PC-3 (cell line): ENCODE measurements at regions of chr3 and their contacts with region 1.

Region 1: GRCh38 chr3:153161138-153161713 is 800 bp upstream of the RAP2B start:
- DNase-seq: peak; percentile 99
- ATAC-seq: peak; percentile 69
- H3K4me3 ChIP-seq: peak overlapping the region; percentile 95
- H3K27ac ChIP-seq: peak overlapping the region; percentile 94
- H3K4me1 ChIP-seq: peaks cover 31% of the 10 kb centered on the region
- H3K27me3 ChIP-seq: no peaks in the 10 kb centered on the region
- CTCF ChIP-seq: no peak

Region 2: DNA sequence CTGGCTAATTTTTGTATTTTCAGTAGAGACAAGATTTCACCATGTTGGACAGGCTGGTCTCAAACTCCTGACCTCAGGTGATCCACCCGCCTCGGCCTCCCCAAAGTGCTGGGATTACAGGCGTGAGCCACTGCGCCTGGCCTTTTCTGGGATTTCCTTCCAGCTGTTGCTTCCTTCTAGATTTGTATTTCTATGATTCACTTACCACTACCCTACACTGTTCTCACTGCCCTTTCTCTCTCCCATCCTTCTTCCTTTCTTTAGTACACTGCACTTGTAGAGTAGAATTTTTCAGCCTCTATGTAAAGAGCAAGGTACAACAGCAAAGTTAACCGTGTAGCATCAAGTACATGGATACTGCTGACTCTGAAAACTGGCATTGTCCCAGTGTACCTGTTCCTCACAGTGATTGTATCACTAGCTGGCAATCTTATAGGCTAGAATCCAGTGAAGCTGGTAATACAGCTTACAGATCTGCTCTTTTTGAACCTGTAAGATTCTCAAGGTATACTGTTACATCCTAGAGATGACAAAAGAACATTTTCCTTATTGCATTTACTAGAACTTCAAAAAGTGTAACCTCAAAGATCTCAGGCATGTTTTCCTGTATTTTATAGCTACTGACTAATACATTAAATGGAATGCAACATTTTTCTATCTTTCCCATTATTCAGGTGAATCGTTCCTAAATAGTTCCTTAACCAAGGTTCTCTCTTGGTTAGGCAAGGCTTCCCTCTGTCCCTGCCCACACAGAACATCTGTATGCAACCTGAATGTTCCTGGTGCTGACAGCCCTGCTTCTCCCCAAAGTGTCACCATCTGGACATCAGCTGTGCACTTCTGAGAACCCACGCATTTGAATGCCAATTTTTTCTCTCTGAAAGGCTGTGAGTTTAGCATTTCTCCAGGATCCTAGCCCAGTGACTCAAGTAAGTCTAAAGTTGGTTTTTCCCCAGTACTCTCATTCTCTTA is 73.3 kb before region 1 on chr3:
- CTCF ChIA-PET with region 1: no interaction called
- POLR2A ChIA-PET with region 1: no interaction called
- intact Hi-C with region 1: loop called (anchors 2 kb)
- DNase-seq: peak; percentile 75
- ATAC-seq: peak; percentile 83
- H3K4me3 ChIP-seq: no peak overlapping the region
- H3K27ac ChIP-seq: peak overlapping the region; percentile 45
- H3K4me1 ChIP-seq: peaks cover 25% of the 10 kb centered on the region
- H3K27me3 ChIP-seq: no peaks in the 10 kb centered on the region
- CTCF ChIP-seq: no peak

Region 3: GRCh38 chr3:153144779-153145178 is 16.4 kb before region 1 on chr3:
- CTCF ChIA-PET with region 1: no interaction called
- POLR2A ChIA-PET with region 1: interaction called, 20 read pairs
- intact Hi-C with region 1: loop called (anchors 1 kb)
- DNase-seq: peak; percentile 79
- ATAC-seq: peak; percentile 21
- H3K4me3 ChIP-seq: peak overlapping the region; percentile 28; the same call in 1 of the 2 replicates
- H3K27ac ChIP-seq: peak overlapping the region; percentile 80
- H3K4me1 ChIP-seq: peaks cover 56% of the 10 kb centered on the region
- H3K27me3 ChIP-seq: no peaks in the 10 kb centered on the region
- CTCF ChIP-seq: no peak

Region 4: GRCh38 chr3:153284282-153284938 is 123.2 kb after region 1 on chr3:
- CTCF ChIA-PET with region 1: interaction called, 3 read pairs
- POLR2A ChIA-PET with region 1: interaction called, 9 read pairs
- intact Hi-C with region 1: loop called (anchors 1 kb)
- DNase-seq: peak; percentile 78
- ATAC-seq: peak; percentile 87
- H3K4me3 ChIP-seq: no peak overlapping the region
- H3K27ac ChIP-seq: peak overlapping the region; percentile 46
- H3K4me1 ChIP-seq: peaks cover 42% of the 10 kb centered on the region
- H3K27me3 ChIP-seq: no peaks in the 10 kb centered on the region
- CTCF ChIP-seq: no peak

Region 5: DNA sequence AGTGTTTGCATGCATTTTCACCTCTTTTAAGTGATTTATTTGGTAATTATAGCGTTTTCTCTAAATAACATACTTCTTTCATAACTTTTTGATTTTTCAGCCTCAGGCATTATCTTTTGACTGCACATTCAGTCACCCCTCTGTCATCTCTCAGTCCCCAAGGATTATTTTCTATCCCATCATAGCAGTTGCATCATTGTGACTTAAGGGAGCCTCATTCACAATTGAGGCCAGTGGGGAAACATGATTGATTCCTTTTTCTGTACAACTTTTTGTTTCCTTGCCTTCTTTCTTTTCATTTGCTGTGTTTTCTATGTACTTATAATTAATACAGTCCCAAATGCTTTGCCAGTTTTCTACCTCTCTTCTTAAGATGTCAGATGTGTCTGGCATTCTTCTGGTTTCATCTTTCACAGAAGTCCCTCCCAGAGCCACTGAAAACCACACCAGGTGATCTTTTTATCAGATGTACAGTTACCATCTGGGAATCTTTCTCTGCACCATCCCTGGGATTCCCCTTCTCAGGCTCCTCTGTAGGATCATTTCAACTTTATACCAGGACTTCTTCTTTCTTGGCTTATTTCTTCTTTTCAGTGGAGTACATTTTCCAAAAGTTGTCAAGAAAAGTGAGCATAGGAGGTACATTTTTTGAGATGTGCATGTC is 152.2 kb after region 1 on chr3:
- CTCF ChIA-PET with region 1: no interaction called
- POLR2A ChIA-PET with region 1: no interaction called
- intact Hi-C with region 1: no loop called
- DNase-seq: no peak
- ATAC-seq: no peak
- H3K4me3 ChIP-seq: no peak overlapping the region
- H3K27ac ChIP-seq: no peak overlapping the region
- H3K4me1 ChIP-seq: 0 out of 2 replicates have a peak, but pooled peaks cover 5% of the 10 kb centered on the region
- H3K27me3 ChIP-seq: no peaks in the 10 kb centered on the region
- CTCF ChIP-seq: no peak

Region 6: DNA sequence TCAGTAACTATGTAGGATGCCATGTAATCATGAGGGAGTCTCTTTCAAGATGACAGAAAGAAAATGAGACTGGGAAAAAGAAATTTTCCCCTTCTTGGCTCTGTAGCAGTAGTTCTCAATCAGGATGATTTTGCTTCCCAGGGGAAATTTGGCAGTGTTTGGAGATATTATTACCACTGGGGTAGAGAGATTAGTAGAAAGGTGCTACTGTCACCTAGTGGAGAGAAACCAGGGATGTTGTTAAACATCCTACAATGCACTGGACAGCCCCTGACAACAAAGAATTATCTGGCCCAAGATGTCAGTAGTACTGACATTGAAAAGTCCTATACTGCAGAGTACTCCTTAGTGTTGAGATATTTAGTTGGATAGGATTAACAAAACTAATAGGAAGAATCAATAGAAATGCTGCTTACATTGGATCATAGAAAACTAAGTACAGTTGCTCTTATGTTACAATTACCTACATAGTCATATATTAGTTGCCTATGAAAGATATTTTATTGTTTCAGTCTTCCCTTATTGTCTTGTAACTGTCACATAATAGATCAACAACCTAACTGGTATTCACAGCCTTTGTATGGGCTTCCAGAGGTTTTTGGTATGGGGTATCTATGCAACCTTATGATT is 434.1 kb after region 1 on chr3:
- CTCF ChIA-PET with region 1: interaction called, 4 read pairs
- POLR2A ChIA-PET with region 1: no interaction called
- intact Hi-C with region 1: loop called (anchors 2 kb)
- DNase-seq: peak; percentile 68
- ATAC-seq: peak; percentile 39
- H3K4me3 ChIP-seq: no peak overlapping the region
- H3K27ac ChIP-seq: no peak overlapping the region
- H3K4me1 ChIP-seq: peaks cover 22% of the 10 kb centered on the region
- H3K27me3 ChIP-seq: no peaks in the 10 kb centered on the region
- CTCF ChIP-seq: peak; percentile 90